Activated B cell treated with CpG ODN at 0.5 μM for 24 hours (primary cell): ENCODE measurements at regions of chr5 and their contacts with region 1.

Region 1: DNA sequence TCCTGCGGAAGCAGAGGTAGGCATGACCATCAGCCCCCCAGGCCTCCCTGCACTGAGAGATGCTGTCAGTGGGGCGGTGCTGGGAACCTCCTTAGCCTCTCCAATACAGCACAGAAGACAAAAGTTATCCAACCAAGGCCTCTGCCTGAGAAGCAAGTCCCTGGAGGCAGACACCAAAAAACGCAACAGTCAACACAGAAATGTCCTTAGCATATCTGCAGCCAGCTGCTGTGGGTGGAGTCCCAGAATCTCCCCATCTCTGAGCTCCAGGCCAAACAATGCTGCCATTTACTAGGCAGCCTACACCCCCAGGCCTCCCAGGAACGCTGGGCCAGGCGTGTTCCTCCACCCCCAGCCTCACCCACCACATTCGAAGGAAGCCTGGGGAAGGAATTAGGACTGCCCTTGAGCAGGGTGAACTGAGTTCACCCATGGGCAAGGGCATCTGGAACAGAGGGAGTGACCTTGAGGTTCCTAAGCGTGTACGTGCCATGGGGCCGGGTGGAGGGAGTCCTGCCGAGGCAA is 43.7 kb downstream of the STK10 start:
- DNase-seq: no peak
- ATAC-seq: peak; percentile 92
- H3K4me3 Mint-ChIP-seq: peak overlapping the region; percentile 7
- H3K27ac Mint-ChIP-seq: peak overlapping the region; percentile 85
- H3K4me1 Mint-ChIP-seq: peaks cover 73% of the 10 kb centered on the region
- H3K27me3 Mint-ChIP-seq: no peaks in the 10 kb centered on the region
- CTCF ChIP-seq: no peak

Region 2: DNA sequence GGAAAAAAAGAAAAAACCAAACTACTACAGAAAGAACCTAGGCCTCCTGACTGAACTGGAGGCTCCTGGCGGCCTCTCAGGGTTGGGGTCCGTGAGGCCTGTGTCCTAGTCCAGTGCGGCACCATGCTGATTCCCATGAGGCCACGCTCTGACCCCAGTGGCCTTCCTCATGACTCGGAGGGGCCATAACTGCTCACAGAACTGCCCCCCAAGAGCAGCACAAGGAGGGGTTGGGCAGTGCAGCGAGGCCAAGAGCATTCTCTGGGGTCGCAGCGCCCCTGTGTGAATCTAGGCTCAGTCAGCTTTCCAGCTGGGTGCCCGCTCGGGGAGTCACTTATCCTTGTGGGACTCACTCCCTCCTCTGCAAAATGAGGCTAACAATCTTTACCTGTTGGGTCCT is 58.6 kb before region 1 on chr5:
- CTCF ChIA-PET with region 1: no interaction called
- POLR2A ChIA-PET with region 1: no interaction called
- intact Hi-C with region 1: no loop called
- DNase-seq: no peak
- ATAC-seq: no peak
- H3K4me3 Mint-ChIP-seq: no peak overlapping the region
- H3K27ac Mint-ChIP-seq: no peak overlapping the region
- H3K4me1 Mint-ChIP-seq: no peaks in the 10 kb centered on the region
- H3K27me3 Mint-ChIP-seq: no peaks in the 10 kb centered on the region
- CTCF ChIP-seq: no peak

Region 3: DNA sequence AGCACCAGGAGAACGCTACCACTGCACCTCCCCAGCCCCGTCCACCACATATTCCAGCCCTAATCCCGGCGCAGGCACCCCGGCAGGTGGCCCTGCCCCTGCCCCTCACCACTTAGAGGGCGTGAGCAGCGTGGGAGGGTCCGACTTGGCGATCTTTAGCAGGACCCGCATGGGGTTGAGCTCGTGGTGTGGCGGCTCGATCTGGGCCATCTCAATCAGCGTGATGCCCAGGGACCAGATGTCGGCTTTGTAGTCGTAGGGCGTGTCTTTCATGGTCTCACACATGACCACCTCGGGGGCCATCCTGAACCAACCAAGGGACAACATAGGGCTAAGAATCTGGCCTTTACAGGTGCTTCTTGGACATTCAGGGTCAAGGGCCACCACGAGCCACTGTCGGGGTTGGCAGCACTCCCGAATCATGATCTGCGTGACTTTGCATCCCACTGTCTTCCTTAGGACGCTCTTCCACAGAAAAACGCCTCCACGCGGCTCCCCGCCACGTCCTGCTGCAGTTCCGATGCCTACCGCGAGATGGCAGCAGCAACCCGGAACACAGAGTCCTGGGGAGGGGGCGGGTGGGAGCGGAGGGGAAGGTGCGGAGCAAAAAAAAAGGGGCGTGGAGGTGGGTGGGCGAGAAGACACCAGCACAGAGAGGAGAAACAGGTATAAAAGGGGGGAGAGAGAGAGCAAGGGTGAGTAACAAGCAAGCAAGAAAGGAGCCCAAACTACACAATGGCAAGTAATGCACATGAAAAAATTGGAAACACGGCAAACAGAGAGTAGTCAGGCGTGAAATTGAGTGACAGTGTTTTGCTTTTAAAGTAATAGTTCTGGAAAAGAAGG is 37.6 kb before region 1 on chr5:
- CTCF ChIA-PET with region 1: no interaction called
- POLR2A ChIA-PET with region 1: interaction called, 3 read pairs
- intact Hi-C with region 1: loop called (anchors 1 kb)
- DNase-seq: peak; percentile 71
- ATAC-seq: no peak
- H3K4me3 Mint-ChIP-seq: no peak overlapping the region
- H3K27ac Mint-ChIP-seq: peak overlapping the region; percentile 68
- H3K4me1 Mint-ChIP-seq: peaks cover 41% of the 10 kb centered on the region
- H3K27me3 Mint-ChIP-seq: no peaks in the 10 kb centered on the region
- CTCF ChIP-seq: peak; percentile 34

Region 4: DNA sequence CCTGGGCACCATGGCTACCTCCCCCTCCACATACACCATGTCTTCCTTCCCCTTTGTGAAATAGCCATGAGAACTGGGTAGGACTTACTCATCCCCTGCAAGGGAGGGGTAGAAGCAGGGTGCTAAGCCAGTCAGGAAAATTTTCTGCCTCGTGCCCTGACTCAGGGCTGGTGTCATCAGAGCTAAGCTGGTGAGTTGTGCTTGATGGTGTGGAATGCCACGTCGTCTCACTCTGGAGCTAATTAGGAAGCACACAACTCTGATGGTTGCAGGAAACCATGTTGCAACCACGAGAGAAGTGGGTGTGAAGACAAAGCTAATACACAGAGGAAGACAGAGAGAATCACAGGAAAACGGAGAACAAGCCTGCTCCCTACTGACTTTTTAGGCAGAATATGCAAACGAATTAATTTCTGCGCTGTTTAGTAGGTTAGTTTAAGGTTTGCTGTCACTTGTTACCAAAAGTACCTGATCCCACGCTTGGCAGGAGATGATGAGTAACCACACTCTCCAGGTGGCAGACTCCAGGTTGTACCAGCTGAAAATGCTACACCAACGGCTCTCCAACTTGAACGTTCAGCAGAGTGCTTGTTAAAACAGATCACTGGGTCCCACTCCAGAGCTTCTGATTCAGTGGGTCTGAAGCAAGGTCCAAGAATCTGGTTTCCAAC is 10.9 kb before region 1 on chr5:
- CTCF ChIA-PET with region 1: no interaction called
- POLR2A ChIA-PET with region 1: interaction called, 4 read pairs
- intact Hi-C with region 1: loop called (anchors 1 kb)
- DNase-seq: no peak
- ATAC-seq: peak; percentile 73
- H3K4me3 Mint-ChIP-seq: peak overlapping the region; percentile 9
- H3K27ac Mint-ChIP-seq: peak overlapping the region; percentile 79
- H3K4me1 Mint-ChIP-seq: peaks cover 50% of the 10 kb centered on the region
- H3K27me3 Mint-ChIP-seq: no peaks in the 10 kb centered on the region
- CTCF ChIP-seq: no peak

Region 5: GRCh38 chr5:172156541-172156994 is 12.2 kb after region 1 on chr5:
- CTCF ChIA-PET with region 1: no interaction called
- POLR2A ChIA-PET with region 1: interaction called, 3 read pairs
- intact Hi-C with region 1: loop called (anchors 1 kb)
- DNase-seq: no peak
- ATAC-seq: no peak
- H3K4me3 Mint-ChIP-seq: no peak overlapping the region
- H3K27ac Mint-ChIP-seq: peak overlapping the region; percentile 13
- H3K4me1 Mint-ChIP-seq: peaks cover 85% of the 10 kb centered on the region
- H3K27me3 Mint-ChIP-seq: no peaks in the 10 kb centered on the region
- CTCF ChIP-seq: no peak